ENCODE measurements at regions of chr11 and their contacts with region 1.

Region 1: DNA sequence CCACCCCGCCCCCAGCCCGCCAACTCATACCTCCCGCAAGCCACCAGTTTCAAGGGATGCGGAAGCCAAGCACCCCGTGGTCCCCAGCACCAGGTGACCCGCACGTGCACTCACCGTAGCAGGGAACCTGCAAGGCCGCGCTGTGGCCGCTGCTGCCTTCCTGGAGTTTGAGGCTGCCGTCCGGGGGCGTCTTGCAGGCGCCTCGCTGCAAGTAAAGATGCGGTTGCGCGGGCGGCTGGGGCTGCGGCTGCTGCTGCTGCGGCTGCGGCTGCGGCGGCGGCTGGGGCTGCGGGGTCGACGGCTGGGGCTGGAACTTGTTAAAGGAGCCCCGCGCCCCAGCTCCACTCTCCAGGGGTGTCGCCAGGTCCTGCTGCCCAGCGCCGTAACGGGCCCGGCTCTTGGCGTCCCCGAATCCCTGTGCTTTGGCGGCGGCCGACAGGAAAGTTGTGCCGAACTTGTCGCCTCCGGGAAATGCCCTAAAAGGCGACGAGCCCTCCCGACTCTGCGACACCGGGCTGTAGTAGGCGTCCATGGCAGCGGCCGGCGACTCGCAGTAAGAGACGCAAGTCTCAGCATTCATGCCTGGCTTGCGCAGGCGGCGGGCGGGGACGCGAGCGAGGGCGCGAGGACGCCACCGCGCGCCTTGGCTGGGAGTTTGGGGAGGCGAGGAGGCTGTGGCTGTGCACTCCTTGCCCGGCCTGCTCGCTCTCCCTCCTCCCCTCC is at the start of gene ALX4:
- DNase-seq: no peak
- ATAC-seq: peak; percentile 25
- H3K4me3 Mint-ChIP-seq: peak within 1 kb of the TSS; percentile 66
- H3K27ac Mint-ChIP-seq: no peak within 1 kb of the TSS
- H3K4me1 Mint-ChIP-seq: peaks cover 29% of the 10 kb centered on the region
- H3K27me3 Mint-ChIP-seq: peaks cover 74% of the 10 kb centered on the region
- CTCF ChIP-seq: no peak
- total RNA-seq, gene ALX4: not detected in 2 replicates

Region 2: DNA sequence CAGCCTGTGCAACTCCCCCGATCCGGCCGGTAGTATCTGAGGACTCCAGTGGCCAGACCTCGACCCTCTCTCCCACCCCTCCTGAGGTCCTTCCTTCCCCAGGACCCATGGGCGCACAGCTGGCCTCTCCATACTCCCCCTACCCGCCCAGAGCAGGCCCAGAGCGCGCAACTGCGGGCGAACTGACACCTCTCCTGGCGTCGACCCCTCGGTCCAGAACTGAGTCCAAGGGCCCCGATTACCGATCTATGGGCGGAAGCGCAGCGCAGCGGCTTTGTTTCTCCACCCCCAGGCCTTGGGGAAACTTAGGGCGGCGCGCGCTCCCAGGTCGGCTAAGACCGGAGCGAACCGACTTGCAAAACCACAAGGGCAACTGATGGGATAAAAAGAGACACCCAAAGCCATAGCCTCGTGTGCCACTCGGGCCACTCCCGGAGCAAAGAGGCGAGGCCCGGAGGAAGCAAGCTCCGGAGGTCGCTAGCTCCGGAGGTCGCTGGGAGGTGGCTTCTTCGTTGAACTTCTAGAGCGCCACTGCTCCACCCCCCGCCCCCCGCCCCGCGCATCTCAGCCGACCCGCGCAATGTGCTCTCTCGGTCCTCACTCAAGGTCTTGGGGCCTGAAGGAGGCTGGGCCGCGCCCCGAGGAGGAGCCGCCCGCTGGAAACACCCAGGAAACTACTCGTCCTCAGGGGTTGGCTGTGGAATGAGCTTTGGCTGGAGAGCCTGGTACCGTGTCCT is 10.1 kb after region 1 on chr11:
- CTCF ChIA-PET with region 1: no interaction called
- POLR2A ChIA-PET with region 1: no interaction called
- intact Hi-C with region 1: loop called (anchors 2 kb)
- DNase-seq: no peak
- ATAC-seq: no peak
- H3K4me3 Mint-ChIP-seq: no peak overlapping the region
- H3K27ac Mint-ChIP-seq: no peak overlapping the region
- H3K4me1 Mint-ChIP-seq: peaks cover 19% of the 10 kb centered on the region
- H3K27me3 Mint-ChIP-seq: peaks cover 82% of the 10 kb centered on the region
- CTCF ChIP-seq: no peak

Region 3: DNA sequence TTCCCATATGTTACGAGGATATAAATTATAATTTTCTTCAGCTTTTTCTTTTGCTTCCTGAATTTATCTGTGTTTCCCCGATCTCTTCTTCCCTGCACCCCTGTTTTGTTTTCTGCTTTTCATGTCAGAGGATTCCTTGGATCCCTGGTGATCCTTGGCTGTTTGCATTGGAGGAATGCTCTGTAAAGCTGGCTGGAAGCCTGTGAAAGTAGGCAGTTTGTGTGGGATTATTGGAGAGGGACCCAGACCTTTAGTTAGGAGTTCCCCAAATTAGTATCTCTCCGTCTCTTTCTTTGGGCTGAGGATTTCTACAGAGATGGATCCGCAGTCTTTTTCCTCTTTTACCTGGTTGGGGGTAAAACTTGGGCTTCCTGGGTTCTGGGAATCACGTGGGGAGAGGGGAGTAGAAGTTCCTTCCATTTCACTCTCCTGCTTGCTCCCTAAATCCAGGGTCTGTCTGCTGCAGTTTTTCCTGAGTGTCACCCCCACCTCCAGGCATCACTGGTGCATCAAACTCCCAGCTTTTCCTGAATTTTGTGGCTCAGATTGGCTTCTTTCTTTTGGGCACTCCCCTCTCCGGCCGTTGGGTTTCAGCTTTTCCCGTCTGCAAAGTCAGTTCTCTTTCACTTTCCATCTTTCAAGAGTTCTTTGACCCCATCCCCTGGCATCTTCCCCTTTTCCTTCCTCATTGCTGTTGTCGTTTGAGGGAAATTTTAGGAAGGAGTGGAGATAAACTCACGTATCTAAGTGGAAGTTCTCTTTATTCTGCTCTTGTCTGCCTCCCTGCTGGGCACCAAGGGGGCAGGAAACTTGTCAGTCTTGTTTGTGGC is 79.4 kb after region 1 on chr11:
- CTCF ChIA-PET with region 1: no interaction called
- POLR2A ChIA-PET with region 1: no interaction called
- intact Hi-C with region 1: no loop called
- DNase-seq: no peak
- ATAC-seq: no peak
- H3K4me3 Mint-ChIP-seq: no peak overlapping the region
- H3K27ac Mint-ChIP-seq: no peak overlapping the region
- H3K4me1 Mint-ChIP-seq: peaks cover 7% of the 10 kb centered on the region
- H3K27me3 Mint-ChIP-seq: peaks cover 23% of the 10 kb centered on the region
- CTCF ChIP-seq: no peak

Region 4: GRCh38 chr11:44427432-44427831 is 117.8 kb after region 1 on chr11:
- CTCF ChIA-PET with region 1: no interaction called
- POLR2A ChIA-PET with region 1: no interaction called
- intact Hi-C with region 1: no loop called
- DNase-seq: no peak
- ATAC-seq: no peak
- H3K4me3 Mint-ChIP-seq: no peak overlapping the region
- H3K27ac Mint-ChIP-seq: no peak overlapping the region
- H3K4me1 Mint-ChIP-seq: no peaks in the 10 kb centered on the region
- H3K27me3 Mint-ChIP-seq: peaks cover 37% of the 10 kb centered on the region
- CTCF ChIP-seq: no peak

Region 5: DNA sequence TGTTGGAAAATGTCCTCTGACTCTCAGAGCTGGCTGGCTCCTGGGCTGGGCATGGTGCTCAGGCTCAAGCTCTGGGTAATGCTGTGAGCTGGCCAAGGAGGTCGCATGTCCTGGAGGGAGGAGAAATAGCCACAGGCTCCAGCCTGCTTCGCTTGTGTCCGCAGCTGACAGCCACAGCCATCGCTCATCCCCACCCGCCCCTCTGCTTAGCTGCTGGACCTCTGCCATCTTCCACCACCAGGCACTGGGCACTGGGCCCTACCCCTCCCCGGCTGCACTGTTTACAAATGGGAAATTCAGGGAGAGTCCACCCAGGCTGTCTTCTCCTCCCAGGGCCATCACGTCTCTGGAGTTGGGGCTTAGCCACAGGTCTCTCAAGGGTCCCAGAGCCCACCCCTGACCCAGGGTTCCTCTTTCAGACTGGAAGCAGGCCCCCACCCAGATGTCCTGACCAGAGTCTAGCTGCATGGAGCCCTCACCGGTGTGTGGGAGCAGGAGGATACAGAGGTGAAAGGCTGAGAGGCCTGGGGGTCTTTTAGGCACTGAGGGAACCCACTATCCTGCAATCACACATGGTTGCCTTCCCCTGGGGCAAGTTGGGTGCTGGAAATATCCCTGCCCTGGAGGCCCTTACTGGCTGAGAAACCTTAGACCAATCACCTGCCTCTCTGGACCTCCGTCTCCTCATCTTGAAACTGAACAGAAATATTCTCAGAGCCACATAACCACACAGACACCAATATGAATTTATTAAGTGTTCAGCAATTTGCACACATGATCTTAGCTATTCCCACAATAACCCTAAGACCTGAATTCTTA is 318.5 kb after region 1 on chr11:
- CTCF ChIA-PET with region 1: no interaction called
- POLR2A ChIA-PET with region 1: no interaction called
- intact Hi-C with region 1: loop called (anchors 5 kb)
- DNase-seq: no peak
- ATAC-seq: no peak
- H3K4me3 Mint-ChIP-seq: no peak overlapping the region
- H3K27ac Mint-ChIP-seq: no peak overlapping the region
- H3K4me1 Mint-ChIP-seq: peaks cover 33% of the 10 kb centered on the region
- H3K27me3 Mint-ChIP-seq: peaks cover 3% of the 10 kb centered on the region
- CTCF ChIP-seq: no peak

Measured in activated B cell treated with CpG ODN at 0.5 μM for 24 hours (primary cell).